ENCODE measurements at regions of chr3 and their contacts with region 1.

Region 1: DNA sequence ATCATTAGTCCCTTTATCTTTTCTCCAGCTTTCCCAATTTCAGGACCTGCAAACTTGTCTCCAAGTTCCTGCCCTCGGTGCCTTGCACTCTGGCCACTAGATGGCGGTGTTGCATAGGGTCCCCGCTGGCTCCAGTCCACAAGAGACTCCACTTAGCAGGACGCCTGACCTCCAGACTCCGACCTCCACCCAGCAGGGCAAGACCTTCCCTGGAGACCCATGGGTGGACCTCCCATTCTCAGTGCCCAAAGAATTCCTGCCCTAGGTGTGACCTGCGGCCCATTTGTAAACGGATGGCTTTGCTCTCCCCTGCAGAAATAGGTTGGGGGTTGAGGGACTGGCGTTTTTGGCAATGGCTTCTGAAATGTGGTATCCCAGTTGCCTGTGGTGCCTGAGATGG is 82.6 kb downstream of the LSM3 start:
- DNase-seq: peak; percentile 81
- H3K4me3 ChIP-seq: no peak overlapping the region
- H3K27ac ChIP-seq: no peak overlapping the region
- H3K4me1 ChIP-seq: peaks cover 5% of the 10 kb centered on the region
- H3K27me3 ChIP-seq: peaks cover 90% of the 10 kb centered on the region
- CTCF ChIP-seq: peak; percentile 97

Region 2: GRCh38 chr3:13782501-13782900 is 478.7 kb before region 1 on chr3:
- intact Hi-C with region 1: no loop called
- DNase-seq: no peak
- H3K4me3 ChIP-seq: peak overlapping the region; percentile 29
- H3K27ac ChIP-seq: no peak overlapping the region
- H3K4me1 ChIP-seq: peaks cover 14% of the 10 kb centered on the region
- H3K27me3 ChIP-seq: peaks cover 90% of the 10 kb centered on the region
- CTCF ChIP-seq: no peak

Region 3: DNA sequence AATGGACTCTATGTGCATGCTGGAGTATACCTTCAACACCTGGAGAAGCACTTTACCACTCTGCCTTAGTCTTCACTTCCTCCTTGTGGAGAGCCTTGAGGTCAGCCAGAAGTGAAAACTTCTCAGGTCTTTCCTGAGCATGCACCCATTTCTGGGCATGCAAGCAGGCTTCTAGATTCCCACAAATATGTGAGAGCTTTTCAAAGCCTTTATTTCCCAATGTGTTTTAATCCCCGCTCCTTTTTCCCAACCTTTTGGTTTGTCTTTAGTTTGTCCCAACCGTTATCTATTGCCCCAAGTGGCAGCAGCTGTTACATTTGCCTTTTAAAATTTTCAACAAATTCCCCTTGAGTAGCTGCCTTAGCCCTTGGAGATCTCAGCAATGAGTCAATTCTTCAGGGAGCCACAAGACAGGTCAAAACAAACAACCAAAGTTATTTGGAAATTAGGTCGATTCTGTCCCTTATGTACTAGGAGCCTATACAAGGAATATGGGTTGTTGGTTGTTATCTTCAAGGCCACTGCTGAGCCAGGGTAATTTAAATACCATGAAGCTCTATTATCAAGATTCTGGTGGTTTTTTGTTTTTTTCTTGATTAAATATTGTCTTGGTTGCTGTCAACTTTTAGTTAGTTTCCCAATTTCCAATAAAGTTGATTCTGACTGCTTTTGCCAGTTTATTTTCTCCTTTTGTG is 38.2 kb before region 1 on chr3:
- intact Hi-C with region 1: no loop called
- DNase-seq: no peak
- H3K4me3 ChIP-seq: no peak overlapping the region
- H3K27ac ChIP-seq: peak overlapping the region; percentile 43
- H3K4me1 ChIP-seq: peaks cover 5% of the 10 kb centered on the region
- H3K27me3 ChIP-seq: peaks cover 76% of the 10 kb centered on the region
- CTCF ChIP-seq: no peak

Region 4: DNA sequence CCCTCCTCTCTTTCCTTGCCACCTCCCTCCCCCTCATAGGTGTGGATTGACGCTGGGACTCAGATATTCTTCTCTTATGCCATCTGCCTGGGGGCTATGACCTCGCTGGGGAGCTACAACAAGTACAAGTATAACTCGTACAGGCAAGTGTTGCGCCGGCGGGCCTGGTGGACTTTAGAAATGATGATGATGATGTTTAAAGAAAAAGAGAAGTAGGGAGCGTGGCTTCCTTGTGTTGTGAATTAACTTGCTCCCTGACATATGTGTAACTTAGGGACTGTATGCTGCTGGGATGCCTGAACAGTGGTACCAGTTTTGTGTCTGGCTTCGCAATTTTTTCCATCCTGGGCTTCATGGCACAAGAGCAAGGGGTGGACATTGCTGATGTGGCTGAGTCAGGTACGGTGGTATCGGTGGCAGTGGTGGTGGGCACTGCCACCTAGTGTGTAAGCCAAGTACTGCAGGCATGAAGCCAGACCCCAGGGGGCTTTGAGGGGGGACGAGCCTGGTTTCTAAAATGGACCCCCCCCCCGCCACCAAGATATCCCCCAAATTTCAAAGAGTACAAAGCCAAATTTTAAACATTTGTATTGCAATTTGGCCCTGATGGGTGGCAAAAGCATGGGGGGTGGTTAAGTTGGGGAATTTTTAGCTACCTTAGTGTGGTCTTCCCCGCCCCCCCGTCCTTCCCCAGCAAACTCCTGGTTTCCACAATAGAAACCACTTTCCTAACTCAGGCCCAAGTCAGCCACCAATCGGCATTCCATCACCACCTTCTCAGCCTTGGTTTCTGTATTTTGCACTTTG is 206.8 kb after region 1 on chr3:
- intact Hi-C with region 1: loop called (anchors 5 kb)
- DNase-seq: no peak
- H3K4me3 ChIP-seq: no peak overlapping the region
- H3K27ac ChIP-seq: peak overlapping the region; percentile 5
- H3K4me1 ChIP-seq: peaks cover 35% of the 10 kb centered on the region
- H3K27me3 ChIP-seq: peaks cover 48% of the 10 kb centered on the region
- CTCF ChIP-seq: peak; percentile 92